ENCODE measurements at regions of chr12 and their contacts with region 1.

Region 1: GRCh38 chr12:2783936-2784600 is 10.7 kb upstream of the FKBP4 start:
- DNase-seq: peak; percentile 27 to 60 (median 30)
- H3K4me3 ChIP-seq: peak overlapping the region; percentile 32
- H3K4me3 Mint-ChIP-seq: peak overlapping the region in 6 of 7 donors; percentile 54 to 91 (median 80)
- H3K27ac ChIP-seq: no peak overlapping the region
- H3K27ac Mint-ChIP-seq: peak overlapping the region in 1 of 8 donors; percentile 77
- H3K4me1 ChIP-seq: peaks cover 6% of the 10 kb centered on the region
- H3K4me1 Mint-ChIP-seq: peaks cover 9 to 12% (median 11%) of the 10 kb centered on the region in 3 donors
- H3K27me3 ChIP-seq: peaks cover 16% of the 10 kb centered on the region
- H3K27me3 Mint-ChIP-seq: peaks cover 12 to 21% of the 10 kb centered on the region in 2 donors

Region 2: DNA sequence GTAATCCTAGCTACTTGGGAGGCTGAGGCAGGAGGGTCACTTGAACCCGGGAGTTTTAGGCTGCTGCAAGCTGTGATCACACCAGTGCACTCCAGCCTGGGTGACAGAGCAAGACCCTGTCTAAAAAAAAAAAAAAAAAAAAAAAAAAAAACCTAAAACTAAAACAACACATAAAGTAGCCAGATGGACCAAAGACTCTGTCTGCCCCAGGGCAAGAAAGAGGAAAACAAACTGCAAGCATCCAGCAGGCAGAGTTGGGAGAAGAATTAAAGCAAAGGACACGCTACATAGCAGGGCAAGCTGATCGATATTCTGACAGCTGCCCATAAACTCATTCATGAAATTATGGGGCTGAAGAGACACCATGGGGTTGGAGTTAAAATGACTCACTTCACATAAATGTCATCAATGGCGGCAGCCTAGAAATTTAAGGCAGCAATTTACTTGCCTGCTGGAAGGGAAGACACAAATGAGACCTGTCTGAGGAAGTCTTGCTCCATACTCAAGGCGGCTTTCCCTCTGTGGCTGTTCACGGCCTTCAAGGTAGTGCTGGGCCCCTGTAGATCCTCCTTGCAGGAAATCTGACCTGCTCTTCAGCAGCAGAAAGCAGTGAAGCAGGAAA is 248.4 kb before region 1 on chr12:
- CTCF ChIA-PET with region 1: no interaction called
- POLR2A ChIA-PET with region 1: no interaction called
- DNase-seq: no peak
- H3K4me3 ChIP-seq: no peak overlapping the region
- H3K4me3 Mint-ChIP-seq: no peak overlapping the region
- H3K27ac ChIP-seq: no peak overlapping the region
- H3K27ac Mint-ChIP-seq: no peak overlapping the region
- H3K4me1 ChIP-seq: no peaks in the 10 kb centered on the region
- H3K4me1 Mint-ChIP-seq: no peaks in the 10 kb centered on the region
- H3K27me3 ChIP-seq: no peaks in the 10 kb centered on the region
- H3K27me3 Mint-ChIP-seq: peaks cover 5 to 9% of the 10 kb centered on the region in 2 donors

Region 3: GRCh38 chr12:2682296-2683251 is 101.5 kb before region 1 on chr12:
- CTCF ChIA-PET with region 1: interaction called, 42 read pairs
- POLR2A ChIA-PET with region 1: no interaction called
- DNase-seq: peak in 4 of 5 donors; percentile 28 to 68 (median 58)
- H3K4me3 ChIP-seq: no peak overlapping the region
- H3K4me3 Mint-ChIP-seq: peak overlapping the region in 4 of 7 donors; percentile 1 to 74 (median 50)
- H3K27ac ChIP-seq: no peak overlapping the region
- H3K27ac Mint-ChIP-seq: peak overlapping the region in 6 of 8 donors; percentile 41 to 94 (median 87)
- H3K4me1 ChIP-seq: no peaks in the 10 kb centered on the region
- H3K4me1 Mint-ChIP-seq: peaks cover 6 to 11% (median 9%) of the 10 kb centered on the region in 3 donors
- H3K27me3 ChIP-seq: no peaks in the 10 kb centered on the region
- H3K27me3 Mint-ChIP-seq: peaks cover 0 to 5% of the 10 kb centered on the region in 2 donors

Region 4: DNA sequence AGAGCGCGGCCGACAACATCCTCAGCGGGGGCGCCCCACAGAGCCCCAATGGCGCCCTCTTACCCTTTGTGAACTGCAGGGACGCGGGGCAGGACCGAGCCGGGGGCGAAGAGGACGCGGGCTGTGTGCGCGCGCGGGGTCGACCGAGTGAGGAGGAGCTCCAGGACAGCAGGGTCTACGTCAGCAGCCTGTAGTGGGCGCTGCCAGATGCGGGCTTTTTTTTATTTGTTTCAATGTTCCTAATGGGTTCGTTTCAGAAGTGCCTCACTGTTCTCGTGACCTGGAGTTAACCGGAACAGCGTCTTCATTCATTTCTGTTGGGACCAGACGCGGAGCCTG is 93.1 kb before region 1 on chr12:
- CTCF ChIA-PET with region 1: interaction called, 20 read pairs
- POLR2A ChIA-PET with region 1: no interaction called
- DNase-seq: peak; percentile 43 to 79 (median 64)
- H3K4me3 ChIP-seq: peak overlapping the region; percentile 63
- H3K4me3 Mint-ChIP-seq: peak overlapping the region; percentile 89 to 98 (median 94)
- H3K27ac ChIP-seq: peak overlapping the region; percentile 65
- H3K27ac Mint-ChIP-seq: peak overlapping the region; percentile 86 to 99 (median 94)
- H3K4me1 ChIP-seq: peaks cover 26% of the 10 kb centered on the region
- H3K4me1 Mint-ChIP-seq: peaks cover 42 to 55% (median 52%) of the 10 kb centered on the region in 3 donors
- H3K27me3 ChIP-seq: no peaks in the 10 kb centered on the region
- H3K27me3 Mint-ChIP-seq: peaks cover 7 to 10% of the 10 kb centered on the region in 2 donors

Region 5: GRCh38 chr12:2722806-2723205 is 61.3 kb before region 1 on chr12:
- CTCF ChIA-PET with region 1: no interaction called
- POLR2A ChIA-PET with region 1: no interaction called
- DNase-seq: no peak
- H3K4me3 ChIP-seq: no peak overlapping the region
- H3K4me3 Mint-ChIP-seq: no peak overlapping the region
- H3K27ac ChIP-seq: no peak overlapping the region
- H3K27ac Mint-ChIP-seq: no peak overlapping the region
- H3K4me1 ChIP-seq: no peaks in the 10 kb centered on the region
- H3K4me1 Mint-ChIP-seq: no peaks in the 10 kb centered on the region
- H3K27me3 ChIP-seq: no peaks in the 10 kb centered on the region
- H3K27me3 Mint-ChIP-seq: peaks cover 2 to 18% of the 10 kb centered on the region in 2 donors

Region 6: DNA sequence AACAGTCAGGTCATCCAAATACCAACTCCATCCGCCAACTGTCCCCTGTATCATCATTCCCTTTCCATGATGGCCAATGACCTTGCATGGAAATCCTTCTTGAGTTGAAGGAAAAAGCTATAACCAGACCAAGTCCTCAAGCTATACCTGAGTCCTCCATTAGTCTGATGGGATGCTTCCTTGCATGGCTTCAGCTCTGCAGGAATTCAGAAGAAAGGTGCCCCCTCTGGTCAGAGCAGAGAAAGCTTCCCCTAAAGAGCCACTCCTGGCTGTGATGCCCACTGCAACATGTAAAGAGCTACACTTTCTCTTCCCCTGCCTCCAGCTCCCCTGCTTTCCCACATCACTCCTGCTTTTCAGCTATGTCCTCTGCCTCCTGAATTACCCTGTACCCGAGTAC is 32.4 kb before region 1 on chr12:
- CTCF ChIA-PET with region 1: interaction called, 13 read pairs
- POLR2A ChIA-PET with region 1: no interaction called
- DNase-seq: no peak
- H3K4me3 ChIP-seq: no peak overlapping the region
- H3K4me3 Mint-ChIP-seq: no peak overlapping the region
- H3K27ac ChIP-seq: no peak overlapping the region
- H3K27ac Mint-ChIP-seq: no peak overlapping the region
- H3K4me1 ChIP-seq: no peaks in the 10 kb centered on the region
- H3K4me1 Mint-ChIP-seq: peaks cover 0 to 5% (median 3%) of the 10 kb centered on the region in 3 donors
- H3K27me3 ChIP-seq: peaks cover 4% of the 10 kb centered on the region
- H3K27me3 Mint-ChIP-seq: peaks cover 45 to 48% of the 10 kb centered on the region in 2 donors

Region 7: GRCh38 chr12:2794736-2795289 is 10.7 kb after region 1 on chr12 and contains the start of gene FKBP4:
- CTCF ChIA-PET with region 1: interaction called, 16 read pairs
- POLR2A ChIA-PET with region 1: no interaction called
- DNase-seq: peak; percentile 84 to 91 (median 86)
- H3K4me3 ChIP-seq: peak within 1 kb of the TSS; percentile 66
- H3K4me3 Mint-ChIP-seq: peak within 1 kb of the TSS; percentile 89 to 99 (median 91)
- H3K27ac ChIP-seq: peak within 1 kb of the TSS; percentile 18
- H3K27ac Mint-ChIP-seq: peak within 1 kb of the TSS; percentile 66 to 92 (median 78)
- H3K4me1 ChIP-seq: peaks cover 21% of the 10 kb centered on the region
- H3K4me1 Mint-ChIP-seq: peaks cover 14 to 24% (median 21%) of the 10 kb centered on the region in 3 donors
- H3K27me3 ChIP-seq: no peaks in the 10 kb centered on the region
- H3K27me3 Mint-ChIP-seq: no peaks in the 10 kb centered on the region
- total RNA-seq, gene FKBP4: 172 to 183 TPM

Region 8: GRCh38 chr12:2826721-2827515 is 42.9 kb after region 1 on chr12:
- CTCF ChIA-PET with region 1: no interaction called
- POLR2A ChIA-PET with region 1: no interaction called
- DNase-seq: no peak
- H3K4me3 ChIP-seq: no peak overlapping the region
- H3K4me3 Mint-ChIP-seq: no peak overlapping the region
- H3K27ac ChIP-seq: no peak overlapping the region
- H3K27ac Mint-ChIP-seq: peak overlapping the region in 4 of 8 donors; percentile 27 to 84 (median 56)
- H3K4me1 ChIP-seq: no peaks in the 10 kb centered on the region
- H3K4me1 Mint-ChIP-seq: no peaks in the 10 kb centered on the region
- H3K27me3 ChIP-seq: no peaks in the 10 kb centered on the region
- H3K27me3 Mint-ChIP-seq: no peaks in the 10 kb centered on the region

Measured in CD8-positive, alpha-beta memory T cell (primary cell).